Left colon (tissue), 2 donors: ENCODE measurements at regions of chr19 and their contacts with region 1.

Region 1: GRCh38 chr19:51338563-51339312 is 3.2 kb downstream of the VSIG10L start:
- DNase-seq: peak; percentile 85 to 94
- ATAC-seq: peak; percentile 75

Region 2: GRCh38 chr19:51448011-51448744 is 109.4 kb after region 1 on chr19:
- intact Hi-C with region 1: loop called in 1 of 2 experiments (anchors 5 kb)
- DNase-seq: no peak
- ATAC-seq: no peak